HEK293 (cell line): ENCODE measurements at regions of chr17 and their contacts with region 1.

Region 1: DNA sequence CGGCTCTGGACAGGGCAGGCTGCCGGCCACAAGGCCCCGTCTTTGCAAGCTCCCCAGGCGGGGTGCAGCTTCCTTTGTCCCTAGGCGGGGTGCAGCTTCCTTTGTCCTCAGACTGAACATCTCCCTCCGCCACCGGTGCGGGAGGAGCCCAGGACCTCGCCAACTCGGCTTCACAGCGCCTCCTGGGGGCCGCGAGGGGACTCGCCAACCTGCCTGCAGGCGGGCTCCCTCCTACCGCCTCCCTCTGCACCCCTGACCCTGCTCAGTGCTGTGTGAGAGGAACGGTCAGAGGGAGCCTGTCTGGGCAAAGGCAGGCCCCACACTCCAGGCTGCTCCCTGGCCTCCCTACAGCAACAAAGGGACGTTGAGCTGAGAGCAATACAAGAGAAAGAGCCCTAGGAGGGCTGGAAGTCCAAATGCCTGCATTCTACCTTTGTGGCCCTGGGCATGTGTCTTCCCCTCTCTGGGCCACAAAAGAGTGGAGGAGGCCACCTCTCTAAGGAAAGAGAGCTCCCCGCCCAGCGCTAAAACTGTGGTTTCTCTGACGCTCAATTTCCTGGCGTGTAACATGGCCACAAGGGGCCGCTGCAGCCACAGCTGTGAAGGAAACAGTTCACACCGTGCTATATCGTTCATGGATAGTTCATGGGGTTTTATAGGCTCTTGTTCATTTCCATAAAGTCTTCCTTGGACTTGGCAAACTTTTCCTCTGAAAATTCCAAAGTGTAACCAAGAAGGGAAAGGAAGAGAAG is 20.9 kb upstream of the KRT19 start:
- H3K4me3 ChIP-seq: no peak overlapping the region
- H3K27ac ChIP-seq: peak overlapping the region; percentile 38
- H3K4me1 ChIP-seq: no peaks in the 10 kb centered on the region
- CTCF ChIP-seq: peak; percentile 80

Region 2: DNA sequence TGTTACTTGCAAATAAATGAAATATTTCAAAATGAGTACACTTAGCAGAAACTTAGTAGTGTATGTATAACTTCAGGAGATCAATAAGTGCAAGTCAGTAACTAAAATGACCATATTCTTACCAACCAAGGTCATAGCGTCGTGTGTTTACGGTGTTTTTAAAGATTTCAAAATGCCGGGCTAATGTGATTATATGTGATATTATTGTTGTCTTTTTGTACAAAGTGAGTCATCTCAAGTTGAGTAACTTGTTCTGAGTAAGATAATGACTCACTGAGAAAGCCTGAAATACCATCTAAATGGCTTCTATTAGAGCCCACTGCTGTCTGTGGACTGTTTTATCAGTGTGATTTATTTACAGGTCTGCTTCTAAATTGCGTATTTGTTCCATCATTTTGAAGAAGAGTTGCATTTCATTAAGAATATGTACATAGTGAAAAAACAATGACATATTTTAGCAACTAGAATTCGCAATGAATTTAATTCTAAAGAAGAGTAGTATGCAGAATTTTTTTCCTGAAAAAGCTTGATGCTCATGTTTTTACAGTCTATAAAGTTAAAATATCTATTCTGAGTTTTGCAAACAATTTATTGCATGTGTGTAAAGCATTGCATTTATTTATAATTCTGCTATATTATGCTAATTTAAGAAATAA is 694.7 kb before region 1 on chr17:
- CTCF ChIA-PET with region 1: interaction called, 72 read pairs
- POLR2A ChIA-PET with region 1: no interaction called
- H3K4me3 ChIP-seq: no peak overlapping the region
- H3K27ac ChIP-seq: no peak overlapping the region
- H3K4me1 ChIP-seq: peaks cover 5% of the 10 kb centered on the region
- CTCF ChIP-seq: no peak

Region 3: GRCh38 chr17:41322094-41322902 is 226.7 kb before region 1 on chr17:
- CTCF ChIA-PET with region 1: interaction called, 27 read pairs
- POLR2A ChIA-PET with region 1: no interaction called
- H3K4me3 ChIP-seq: no peak overlapping the region
- H3K27ac ChIP-seq: no peak overlapping the region
- H3K4me1 ChIP-seq: no peaks in the 10 kb centered on the region
- CTCF ChIP-seq: no peak; the same call in 1 of the 2 replicates

Region 4: DNA sequence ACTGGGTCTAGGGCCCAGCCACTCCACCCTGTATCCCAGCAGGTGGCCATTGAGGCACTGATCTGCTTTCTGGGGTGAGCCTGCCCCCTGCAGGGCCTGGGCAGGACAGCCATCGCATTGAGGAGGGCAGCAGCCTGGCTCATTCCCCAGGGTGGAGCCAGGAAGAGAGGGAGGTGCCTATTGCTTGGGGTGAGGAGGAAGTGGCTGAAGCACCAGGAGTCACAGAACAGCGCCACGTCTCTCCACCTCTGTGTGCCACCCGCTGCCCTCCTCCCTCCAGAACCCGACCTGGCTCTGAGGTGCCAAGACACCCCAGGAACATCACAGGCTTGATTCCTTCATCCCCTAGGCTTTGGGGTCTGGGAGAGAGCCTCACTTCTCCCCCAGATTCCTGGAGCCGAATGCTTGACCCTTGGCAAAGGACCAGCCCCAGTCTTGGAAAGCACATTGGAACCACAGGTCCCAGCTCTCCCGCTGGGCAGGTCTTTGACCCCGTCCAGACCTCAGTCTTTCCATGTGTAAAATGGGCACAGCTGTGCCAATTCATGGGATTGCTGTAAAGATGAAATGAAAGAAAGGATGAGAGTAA is 52.1 kb before region 1 on chr17:
- CTCF ChIA-PET with region 1: interaction called, 63 read pairs
- POLR2A ChIA-PET with region 1: no interaction called
- H3K4me3 ChIP-seq: no peak overlapping the region
- H3K27ac ChIP-seq: no peak overlapping the region
- H3K4me1 ChIP-seq: peaks cover 6% of the 10 kb centered on the region
- CTCF ChIP-seq: peak; percentile 95

Region 5: GRCh38 chr17:41538565-41538991 is 10.4 kb before region 1 on chr17:
- CTCF ChIA-PET with region 1: interaction called, 113 read pairs
- POLR2A ChIA-PET with region 1: interaction called, 3 read pairs
- H3K4me3 ChIP-seq: no peak overlapping the region
- H3K27ac ChIP-seq: no peak overlapping the region
- H3K4me1 ChIP-seq: no peaks in the 10 kb centered on the region
- CTCF ChIP-seq: no peak

Region 6: DNA sequence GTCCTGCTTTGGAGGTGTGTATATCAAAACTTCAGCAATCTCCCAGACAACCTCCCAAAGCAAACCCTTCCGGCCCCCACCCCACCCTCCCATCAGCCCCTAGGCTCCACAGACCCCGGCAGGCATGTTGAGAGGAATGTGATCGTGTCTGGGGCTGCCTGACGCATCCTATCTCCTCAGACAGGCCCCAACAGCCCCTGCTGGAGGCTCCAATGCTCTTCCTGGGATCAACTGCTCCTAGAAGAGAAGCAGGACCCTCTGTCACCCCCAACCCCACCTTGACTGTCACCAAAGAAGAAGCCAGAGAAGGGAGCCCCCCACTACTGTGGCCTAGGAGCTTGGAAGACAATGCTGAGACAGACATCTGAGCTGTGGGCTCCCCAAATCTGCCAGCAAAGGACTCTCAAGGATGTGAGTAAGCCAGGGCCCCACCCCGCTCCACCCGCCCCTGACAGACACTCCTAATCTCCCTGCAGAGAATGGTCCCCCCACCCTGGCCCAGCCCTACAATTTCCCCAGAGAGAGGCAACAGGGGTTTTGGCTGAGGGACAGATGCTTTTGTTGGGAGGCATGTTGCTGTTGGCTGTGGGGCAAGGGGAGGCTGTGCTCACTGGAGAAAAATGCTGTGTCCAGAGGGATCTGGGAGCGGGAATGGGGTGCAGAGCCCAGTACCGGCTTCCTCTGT is 39.2 kb after region 1 on chr17:
- CTCF ChIA-PET with region 1: interaction called, 10 read pairs
- POLR2A ChIA-PET with region 1: no interaction called
- H3K4me3 ChIP-seq: no peak overlapping the region
- H3K27ac ChIP-seq: no peak overlapping the region
- H3K4me1 ChIP-seq: no peaks in the 10 kb centered on the region
- CTCF ChIP-seq: no peak

Region 7: GRCh38 chr17:41665566-41666236 is 116.7 kb after region 1 on chr17:
- CTCF ChIA-PET with region 1: interaction called, 546 read pairs
- POLR2A ChIA-PET with region 1: interaction called, 4 read pairs
- H3K4me3 ChIP-seq: peak overlapping the region; percentile 25
- H3K27ac ChIP-seq: peak overlapping the region; percentile 45; the same call in 1 of the 2 replicates
- H3K4me1 ChIP-seq: peaks cover 3% of the 10 kb centered on the region
- CTCF ChIP-seq: peak; percentile 98

Region 8: DNA sequence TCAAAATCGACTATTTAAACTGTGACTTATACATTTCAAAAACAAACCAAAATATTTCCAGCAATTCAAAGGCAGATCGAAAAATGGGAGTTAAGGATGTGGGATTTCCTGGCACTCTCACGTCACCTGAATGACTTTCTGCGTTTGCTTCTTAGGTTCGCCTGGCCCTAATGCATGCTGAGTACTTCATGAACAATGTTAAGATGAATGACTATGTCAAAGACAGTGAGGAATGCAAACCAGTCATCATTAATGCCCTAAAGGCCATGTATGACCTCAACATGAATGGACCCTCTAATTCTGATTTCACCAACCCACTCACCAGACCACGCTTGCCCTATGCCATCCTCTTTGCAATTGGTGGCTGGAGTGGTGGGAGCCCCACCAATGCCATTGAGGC is 296.0 kb after region 1 on chr17:
- CTCF ChIA-PET with region 1: no interaction called
- POLR2A ChIA-PET with region 1: no interaction called
- H3K4me3 ChIP-seq: no peak overlapping the region
- H3K27ac ChIP-seq: no peak overlapping the region
- H3K4me1 ChIP-seq: peaks cover 19% of the 10 kb centered on the region
- CTCF ChIP-seq: no peak